ENCODE measurements at regions of chr4 and their contacts with region 1.

Region 1: DNA sequence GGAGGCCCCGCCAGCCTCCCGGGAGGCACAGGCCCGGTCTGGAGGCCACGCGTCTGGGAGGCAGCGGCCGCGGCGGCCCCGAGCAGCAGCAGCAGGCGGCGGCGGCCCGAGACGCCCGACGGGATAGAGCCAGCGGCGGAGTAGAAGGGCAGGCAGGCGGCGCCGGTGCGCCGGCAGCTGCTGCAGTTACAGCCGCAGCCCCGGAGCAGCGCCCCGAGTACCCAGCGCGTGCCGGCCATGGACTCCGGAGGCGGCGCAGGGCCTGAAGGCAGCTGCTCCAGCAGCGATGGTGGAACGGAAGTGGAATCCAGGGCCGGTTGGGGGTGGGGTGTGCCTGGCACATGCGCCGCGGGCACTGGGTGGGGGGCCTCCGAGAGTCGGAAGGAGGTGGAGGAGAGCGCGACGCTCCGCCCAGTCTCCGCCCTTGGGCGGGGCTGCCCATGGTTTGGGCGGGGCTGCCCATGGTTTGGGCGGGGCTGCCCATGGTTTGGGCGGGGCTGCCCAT is at the start of gene GRSF1:
- DNase-seq: peak; percentile 80 to 95 (median 90)
- H3K4me3 ChIP-seq: peak within 1 kb of the TSS; percentile 45 to 96 (median 85)
- H3K27ac ChIP-seq: peak within 1 kb of the TSS; percentile 41 to 97 (median 88)
- H3K27me3 ChIP-seq: no peaks in the 10 kb centered on the region
- CTCF ChIP-seq: peak in 29 of 56 donors; percentile 6 to 49 (median 24)
- total RNA-seq, gene GRSF1: 49.9 to 98.5 (median 76.9) TPM

Region 2: GRCh38 chr4:70704331-70705145 is 135.1 kb before region 1 on chr4:
- intact Hi-C with region 1: loop called in 1 of 2 experiments (anchors 5 kb)
- DNase-seq: peak; percentile 36 to 82 (median 60)
- H3K4me3 ChIP-seq: peak overlapping the region; percentile 61 to 94 (median 85)
- H3K27ac ChIP-seq: peak overlapping the region; percentile 48 to 97 (median 90)
- H3K27me3 ChIP-seq: no peaks in the 10 kb centered on the region
- CTCF ChIP-seq: peak in 42 of 56 donors; percentile 3 to 63 (median 30)

Region 3: GRCh38 chr4:70855464-70855863 is 15.8 kb after region 1 on chr4:
- intact Hi-C with region 1: no loop called
- DNase-seq: no peak
- H3K4me3 ChIP-seq: no peak overlapping the region
- H3K27ac ChIP-seq: no peak overlapping the region
- H3K27me3 ChIP-seq: no peaks in the 10 kb centered on the region
- CTCF ChIP-seq: no peak

Region 4: GRCh38 chr4:70901984-70902576 is 62.4 kb after region 1 on chr4 and contains the start of gene MOB1B:
- intact Hi-C with region 1: loop called (anchors 2 to 5 kb)
- DNase-seq: peak; percentile 62 to 91 (median 86)
- H3K4me3 ChIP-seq: peak within 1 kb of the TSS; percentile 54 to 96 (median 82)
- H3K27ac ChIP-seq: peak within 1 kb of the TSS in 58 of 59 donors; percentile 17 to 95 (median 85)
- H3K27me3 ChIP-seq: no peaks in the 10 kb centered on the region
- CTCF ChIP-seq: peak in 37 of 56 donors; percentile 6 to 51 (median 24)
- total RNA-seq, gene MOB1B: 19.6 to 55.0 (median 32.2) TPM

Region 5: DNA sequence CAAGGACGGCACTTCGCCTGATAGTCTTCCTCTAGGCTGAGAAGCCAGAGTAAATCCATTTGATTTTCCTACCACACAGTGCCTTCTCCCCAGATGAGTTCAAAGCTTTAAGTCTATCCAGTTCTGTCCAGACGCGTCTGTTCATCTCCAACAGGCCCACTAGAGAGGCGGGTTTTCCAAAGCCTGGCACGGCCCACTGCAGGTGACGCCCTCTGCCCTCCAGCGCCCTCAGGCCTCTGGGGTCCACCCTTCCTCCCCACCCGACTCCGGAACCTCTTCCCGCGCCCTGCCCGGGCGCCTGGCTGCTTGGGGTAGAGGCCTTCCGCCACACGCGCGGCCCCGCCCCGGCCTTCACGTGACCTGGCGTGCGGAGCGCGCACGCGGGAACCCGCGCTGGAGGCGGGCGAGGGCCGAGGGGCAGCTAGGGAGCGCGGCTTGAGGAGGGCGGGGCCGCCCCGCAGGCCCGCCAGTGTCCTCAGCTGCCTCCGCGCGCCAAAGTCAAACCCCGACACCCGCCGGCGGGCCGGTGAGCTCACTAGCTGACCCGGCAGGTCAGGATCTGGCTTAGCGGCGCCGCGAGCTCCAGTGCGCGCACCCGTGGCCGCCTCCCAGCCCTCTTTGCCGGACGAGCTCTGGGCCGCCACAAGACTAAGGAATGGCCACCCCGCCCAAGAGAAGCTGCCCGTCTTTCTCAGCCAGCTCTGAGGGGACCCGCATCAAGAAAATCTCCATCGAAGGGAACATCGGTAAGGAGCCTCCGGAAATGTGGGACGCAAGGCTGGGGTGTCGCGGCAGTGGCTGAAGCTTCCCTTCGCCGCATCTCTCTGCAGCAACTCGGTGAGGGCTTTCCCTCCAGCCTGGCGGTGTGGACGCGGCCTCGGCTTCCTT is 153.8 kb after region 1 on chr4 and contains the start of gene DCK:
- intact Hi-C with region 1: loop called (anchors 2 to 5 kb)
- DNase-seq: peak; percentile 71 to 95 (median 86)
- H3K4me3 ChIP-seq: peak within 1 kb of the TSS; percentile 64 to 95 (median 88)
- H3K27ac ChIP-seq: peak within 1 kb of the TSS; percentile 52 to 97 (median 88)
- H3K27me3 ChIP-seq: no peaks in the 10 kb centered on the region
- CTCF ChIP-seq: peak in 34 of 56 donors; percentile 4 to 61 (median 26)
- total RNA-seq, gene DCK: 12.5 to 37.5 (median 22.1) TPM

Measured in dorsolateral prefrontal cortex (tissue), 120 donors.